ENCODE measurements at regions of chr12 and their contacts with region 1.

Region 1: DNA sequence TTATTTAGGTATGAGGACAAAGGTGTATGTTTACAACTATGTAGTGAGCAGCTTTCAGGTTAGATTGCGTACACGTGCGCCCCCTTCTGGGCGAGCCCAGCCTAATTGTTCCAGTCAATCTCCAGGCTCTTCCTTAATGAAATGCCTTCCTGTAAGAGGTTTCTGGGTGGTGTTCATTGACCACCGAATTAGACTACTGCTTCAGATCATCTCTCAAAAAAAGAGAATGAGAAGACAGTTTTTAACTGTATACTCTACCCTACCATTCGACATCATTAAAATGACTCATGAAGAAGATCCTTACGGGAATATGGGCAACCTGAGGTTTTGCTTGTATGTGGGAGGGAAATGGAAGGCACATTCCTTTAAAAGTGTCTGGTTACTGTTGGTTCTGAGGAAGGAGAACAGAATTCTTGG is 2.1 kb downstream of the LUM start:
- DNase-seq: peak; percentile 69
- ATAC-seq: no peak
- H3K4me3 Mint-ChIP-seq: no peak overlapping the region
- H3K27ac Mint-ChIP-seq: no peak overlapping the region
- H3K4me1 Mint-ChIP-seq: no peaks in the 10 kb centered on the region
- H3K27me3 Mint-ChIP-seq: peaks cover 7% of the 10 kb centered on the region

Region 2: GRCh38 chr12:90945070-90945649 is 164.0 kb before region 1 on chr12:
- CTCF ChIA-PET with region 1: interaction called, 14 read pairs
- DNase-seq: no peak
- ATAC-seq: peak; percentile 60
- H3K4me3 Mint-ChIP-seq: no peak overlapping the region
- H3K27ac Mint-ChIP-seq: no peak overlapping the region
- H3K4me1 Mint-ChIP-seq: no peaks in the 10 kb centered on the region
- H3K27me3 Mint-ChIP-seq: peaks cover 3% of the 10 kb centered on the region

Region 3: GRCh38 chr12:90978117-90978770 is 130.9 kb before region 1 on chr12:
- CTCF ChIA-PET with region 1: interaction called, 30 read pairs
- DNase-seq: no peak
- ATAC-seq: peak; percentile 51
- H3K4me3 Mint-ChIP-seq: no peak overlapping the region
- H3K27ac Mint-ChIP-seq: no peak overlapping the region
- H3K4me1 Mint-ChIP-seq: no peaks in the 10 kb centered on the region
- H3K27me3 Mint-ChIP-seq: peaks cover 15% of the 10 kb centered on the region

Region 4: GRCh38 chr12:91058786-91059185 is 50.4 kb before region 1 on chr12:
- CTCF ChIA-PET with region 1: no interaction called
- DNase-seq: no peak
- ATAC-seq: no peak
- H3K4me3 Mint-ChIP-seq: no peak overlapping the region
- H3K27ac Mint-ChIP-seq: no peak overlapping the region
- H3K4me1 Mint-ChIP-seq: no peaks in the 10 kb centered on the region
- H3K27me3 Mint-ChIP-seq: no peaks in the 10 kb centered on the region

Region 5: GRCh38 chr12:91140026-91140931 is 31.1 kb after region 1 on chr12:
- CTCF ChIA-PET with region 1: no interaction called
- DNase-seq: no peak
- ATAC-seq: no peak
- H3K4me3 Mint-ChIP-seq: no peak overlapping the region
- H3K27ac Mint-ChIP-seq: no peak overlapping the region
- H3K4me1 Mint-ChIP-seq: no peaks in the 10 kb centered on the region
- H3K27me3 Mint-ChIP-seq: no peaks in the 10 kb centered on the region

Measured in activated CD8-positive, alpha-beta memory T cell treated with anti-CD3 and anti-CD28 coated beads, Interleukin-2, amount 10 ng/mL, durations not matched to agents 7 days and 5 days (primary cell).